ENCODE measurements at regions of chr5 and their contacts with region 1.

Region 1: DNA sequence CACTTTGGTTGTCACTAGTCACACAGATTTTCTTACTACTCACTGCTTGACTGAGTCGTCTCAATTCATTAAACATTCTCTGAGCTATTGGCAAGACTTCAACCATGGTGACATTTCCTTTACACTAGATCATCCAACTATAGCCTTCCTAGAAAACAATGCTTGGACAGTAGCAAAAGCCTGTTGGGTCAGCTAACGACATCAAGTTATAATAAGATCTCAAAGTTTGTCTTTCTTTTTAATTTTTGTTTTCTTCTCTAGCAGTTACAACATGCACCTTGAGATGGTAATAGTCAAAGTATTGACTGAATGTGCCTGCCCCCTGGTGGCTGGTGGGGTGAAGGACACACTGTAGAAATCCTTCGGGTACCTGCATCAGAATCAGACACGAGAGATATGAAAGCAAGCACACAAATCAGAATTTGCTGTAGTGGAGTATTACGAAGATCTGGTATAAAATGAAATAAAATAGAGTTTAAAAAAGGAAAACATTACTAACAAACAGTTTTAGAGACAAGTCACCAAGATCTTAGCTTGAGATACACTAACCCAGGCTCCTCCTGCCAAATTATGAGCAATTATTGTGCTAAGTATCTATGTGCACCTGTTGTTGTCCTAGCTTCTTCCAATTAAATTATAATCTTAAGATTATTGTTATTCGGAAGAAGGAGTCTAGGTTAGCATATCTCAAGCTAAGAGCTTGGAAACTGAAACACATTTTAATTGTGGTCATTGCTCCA is 81.2 kb downstream of the ARL15 start:
- DNase-seq: peak; percentile 10
- H3K4me3 ChIP-seq: no peak overlapping the region
- H3K27ac ChIP-seq: no peak overlapping the region
- H3K27me3 ChIP-seq: no peaks in the 10 kb centered on the region
- CTCF ChIP-seq: peak; percentile 94

Region 2: GRCh38 chr5:53123702-53124101 is 1105.5 kb before region 1 on chr5:
- CTCF ChIA-PET with region 1: interaction called, 12 read pairs
- POLR2A ChIA-PET with region 1: no interaction called
- DNase-seq: no peak
- H3K4me3 ChIP-seq: no peak overlapping the region
- H3K27ac ChIP-seq: no peak overlapping the region
- H3K27me3 ChIP-seq: no peaks in the 10 kb centered on the region
- CTCF ChIP-seq: peak; percentile 35; the same call in 1 of the 2 replicates

Region 3: DNA sequence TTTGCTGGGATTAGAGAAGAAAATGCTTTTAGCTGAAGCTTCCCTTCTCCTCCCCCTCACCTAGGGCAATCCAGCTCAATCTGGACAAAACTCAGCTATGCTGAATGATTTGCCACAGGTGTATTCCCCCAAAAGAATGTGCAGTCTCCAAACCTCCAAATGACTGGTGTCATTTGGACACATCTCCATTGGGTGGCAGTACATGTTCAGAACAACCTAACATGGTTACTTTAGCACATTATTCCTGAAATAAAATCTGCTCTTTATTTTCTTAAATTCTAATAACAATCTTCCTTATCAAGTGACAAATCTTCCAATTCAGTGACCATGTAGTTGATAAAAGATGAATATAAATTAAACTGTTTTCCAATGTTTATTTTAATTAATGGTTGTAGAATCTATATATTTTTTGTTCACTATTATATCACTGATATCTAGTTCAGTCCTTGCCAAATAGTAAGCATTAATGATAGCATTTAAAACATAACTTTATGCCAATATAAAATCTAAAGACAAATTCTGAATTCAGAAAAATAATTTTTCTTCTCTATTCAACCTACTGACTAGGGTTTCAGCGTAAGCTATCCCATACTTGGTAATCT is 1058.4 kb before region 1 on chr5:
- CTCF ChIA-PET with region 1: interaction called, 27 read pairs
- POLR2A ChIA-PET with region 1: no interaction called
- DNase-seq: no peak
- H3K4me3 ChIP-seq: no peak overlapping the region
- H3K27ac ChIP-seq: no peak overlapping the region
- H3K27me3 ChIP-seq: no peaks in the 10 kb centered on the region
- CTCF ChIP-seq: peak; percentile 76

Region 4: GRCh38 chr5:53262348-53262970 is 966.8 kb before region 1 on chr5:
- CTCF ChIA-PET with region 1: interaction called, 15 read pairs
- POLR2A ChIA-PET with region 1: no interaction called
- DNase-seq: no peak
- H3K4me3 ChIP-seq: no peak overlapping the region
- H3K27ac ChIP-seq: no peak overlapping the region
- H3K27me3 ChIP-seq: no peaks in the 10 kb centered on the region
- CTCF ChIP-seq: peak; percentile 71

Region 5: DNA sequence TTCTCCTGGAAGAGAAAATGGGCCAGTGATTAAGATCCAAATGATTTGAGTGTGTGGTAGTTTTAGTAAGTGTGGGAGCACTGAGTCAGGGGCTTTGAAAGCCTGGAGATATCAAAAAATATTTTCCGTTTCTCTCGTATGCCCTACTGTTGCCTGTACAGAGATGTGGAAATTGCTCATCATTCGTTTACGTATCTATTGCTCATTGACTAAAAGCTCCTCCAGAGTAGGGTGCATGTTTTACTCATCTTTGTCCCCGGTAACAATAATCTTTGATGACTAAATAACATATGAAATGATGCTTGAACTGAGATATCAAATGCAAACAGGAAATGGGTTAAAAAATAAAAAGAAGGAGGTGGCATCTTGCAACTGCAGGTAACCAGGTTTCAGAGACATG is 863.0 kb before region 1 on chr5:
- CTCF ChIA-PET with region 1: interaction called, 12 read pairs
- POLR2A ChIA-PET with region 1: no interaction called
- DNase-seq: no peak
- H3K4me3 ChIP-seq: no peak overlapping the region
- H3K27ac ChIP-seq: no peak overlapping the region
- H3K27me3 ChIP-seq: no peaks in the 10 kb centered on the region
- CTCF ChIP-seq: no peak

Region 6: DNA sequence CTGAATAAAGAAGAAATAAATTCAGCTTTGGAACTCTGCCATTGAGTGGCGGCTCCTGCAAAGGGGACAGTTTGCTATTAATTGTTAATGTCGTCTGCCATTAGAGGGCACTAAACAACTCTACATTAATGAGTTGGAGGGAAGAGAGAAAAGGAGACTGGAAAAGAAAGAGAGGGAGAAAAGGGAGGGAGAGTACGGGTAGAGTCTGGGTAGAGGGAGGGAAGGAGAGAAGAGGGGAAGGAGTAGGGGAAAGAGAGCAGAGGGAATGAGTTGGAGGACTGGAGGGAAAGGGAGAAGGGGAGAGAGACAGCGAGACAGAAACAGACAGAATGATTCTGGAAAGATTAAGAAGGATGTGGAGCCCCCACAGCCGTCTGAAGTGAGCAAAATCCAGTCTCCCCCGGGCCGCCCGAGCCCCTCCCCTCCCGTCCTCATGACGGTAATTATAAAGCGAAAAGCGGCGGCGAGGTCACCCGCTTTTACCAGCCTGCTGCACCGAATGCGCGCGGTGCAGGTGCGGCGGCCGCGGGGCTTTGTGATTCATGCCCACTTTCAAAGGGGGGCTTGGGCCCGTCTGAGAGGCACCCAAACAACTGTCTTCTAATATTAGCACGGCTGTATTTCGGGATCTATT is 750.7 kb before region 1 on chr5:
- CTCF ChIA-PET with region 1: interaction called, 14 read pairs
- POLR2A ChIA-PET with region 1: no interaction called
- DNase-seq: no peak
- H3K4me3 ChIP-seq: peak overlapping the region; percentile 97
- H3K27ac ChIP-seq: no peak overlapping the region
- H3K27me3 ChIP-seq: no peaks in the 10 kb centered on the region
- CTCF ChIP-seq: peak; percentile 42

Region 7: GRCh38 chr5:53934151-53934820 is 294.9 kb before region 1 on chr5:
- CTCF ChIA-PET with region 1: no interaction called
- POLR2A ChIA-PET with region 1: no interaction called
- DNase-seq: no peak
- H3K4me3 ChIP-seq: no peak overlapping the region
- H3K27ac ChIP-seq: no peak overlapping the region
- H3K27me3 ChIP-seq: no peaks in the 10 kb centered on the region
- CTCF ChIP-seq: no peak

Region 8: GRCh38 chr5:54215233-54215736 is 13.9 kb before region 1 on chr5:
- CTCF ChIA-PET with region 1: interaction called, 11 read pairs
- POLR2A ChIA-PET with region 1: interaction called, 7 read pairs
- DNase-seq: no peak
- H3K4me3 ChIP-seq: no peak overlapping the region
- H3K27ac ChIP-seq: no peak overlapping the region
- H3K27me3 ChIP-seq: no peaks in the 10 kb centered on the region
- CTCF ChIP-seq: no peak

Region 9: DNA sequence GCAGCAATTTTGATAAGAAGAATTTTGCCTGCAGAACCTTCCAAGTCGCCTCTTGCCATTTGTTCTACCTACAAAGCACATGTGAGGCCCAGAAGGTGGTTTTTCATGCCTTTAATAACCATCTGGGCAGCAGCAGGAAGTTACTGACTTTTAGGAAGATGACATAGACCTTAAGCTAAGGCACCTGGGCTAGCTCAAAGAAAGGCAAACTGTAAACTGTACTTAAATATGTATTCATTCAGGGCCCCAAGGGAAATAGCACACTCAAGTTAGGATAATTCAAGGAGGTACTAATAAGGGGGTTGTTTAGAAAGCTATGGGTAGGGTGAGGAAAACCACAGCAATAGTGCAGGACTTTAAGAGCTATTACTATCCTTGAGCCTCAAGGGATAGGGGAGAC is 169.0 kb after region 1 on chr5:
- CTCF ChIA-PET with region 1: no interaction called
- POLR2A ChIA-PET with region 1: no interaction called
- DNase-seq: no peak
- H3K4me3 ChIP-seq: no peak overlapping the region
- H3K27ac ChIP-seq: no peak overlapping the region
- H3K27me3 ChIP-seq: peaks cover 11% of the 10 kb centered on the region
- CTCF ChIP-seq: no peak

Region 10: GRCh38 chr5:54469622-54470021 is 240.4 kb after region 1 on chr5:
- CTCF ChIA-PET with region 1: no interaction called
- POLR2A ChIA-PET with region 1: no interaction called
- DNase-seq: no peak
- H3K4me3 ChIP-seq: peak overlapping the region; percentile 23
- H3K27ac ChIP-seq: peak overlapping the region; percentile 77
- H3K27me3 ChIP-seq: no peaks in the 10 kb centered on the region
- CTCF ChIP-seq: no peak